Right lobe of liver (tissue), 6 donors: ENCODE measurements at regions of chr14 and their contacts with region 1.

Region 1: DNA sequence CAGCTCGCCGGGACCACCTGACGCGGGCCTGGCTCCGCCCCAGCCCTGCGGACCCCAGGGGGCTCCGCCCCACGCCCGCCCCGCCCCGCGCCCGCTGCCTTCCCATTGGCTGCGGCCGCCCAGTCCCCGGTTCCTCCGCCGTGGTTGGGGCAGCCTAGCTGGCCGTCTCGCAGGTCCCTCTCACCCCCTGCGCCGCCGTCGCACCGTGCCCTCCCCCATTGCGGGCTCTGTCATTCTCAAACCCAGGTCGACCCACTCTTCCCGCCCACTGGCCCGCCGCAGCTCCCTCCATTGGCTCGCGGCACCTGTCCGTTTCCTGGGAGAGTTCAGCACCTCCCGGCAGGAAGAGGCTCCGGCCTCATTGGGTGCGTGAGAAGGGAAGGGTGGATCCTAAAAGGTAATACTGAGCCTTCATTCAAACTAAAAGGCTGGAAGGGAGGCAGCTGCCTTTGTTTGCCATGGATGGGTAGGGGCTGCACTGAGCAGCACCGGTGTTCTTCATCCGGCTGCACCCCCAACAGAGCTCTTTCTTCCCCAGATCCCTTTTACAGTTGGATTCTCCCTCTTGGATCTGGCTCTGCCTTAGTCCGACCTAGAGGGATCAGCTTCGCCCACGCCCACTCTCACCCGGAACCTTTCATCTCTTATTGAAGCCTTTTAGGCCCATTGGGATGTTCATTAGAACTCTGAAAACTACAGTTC is 381 bp upstream of the MAP3K9 start:
- DNase-seq: peak; percentile 96 to 99 (median 98)
- ATAC-seq: peak; percentile 97 to 99 (median 98)
- H3K4me3 ChIP-seq: peak overlapping the region; percentile 5 to 85 (median 81)
- H3K27ac ChIP-seq: peak overlapping the region in 1 of 3 donors; percentile 25
- H3K4me1 ChIP-seq: peaks cover 0 to 6% (median 0%) of the 10 kb centered on the region in 4 donors
- H3K27me3 ChIP-seq: no peaks in the 10 kb centered on the region
- CTCF ChIP-seq: no peak
- POLR2A ChIP-seq: no peak

Region 2: DNA sequence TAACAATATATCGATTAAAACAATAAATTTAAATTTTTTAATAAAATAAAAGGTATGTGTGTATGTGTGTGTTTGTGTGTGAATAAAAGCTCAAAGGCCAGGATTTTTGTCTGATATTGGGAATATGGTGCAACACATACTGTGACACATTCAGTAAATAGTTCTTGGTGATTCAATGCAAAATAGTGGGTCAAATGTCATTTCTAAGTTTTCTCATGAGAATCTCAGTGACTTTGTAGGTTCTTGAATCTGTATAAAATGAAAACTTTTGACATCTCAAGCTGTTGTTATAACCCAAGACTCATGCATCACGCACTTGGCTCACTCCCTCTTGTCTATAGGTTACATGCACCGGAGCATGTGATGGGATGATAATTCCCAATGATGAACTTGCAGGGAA is 193.0 kb before region 1 on chr14:
- intact Hi-C with region 1: loop called in 1 of 2 experiments (anchors 10 kb)
- DNase-seq: no peak
- ATAC-seq: peak in 1 of 4 donors; percentile 36
- H3K4me3 ChIP-seq: no peak overlapping the region
- H3K27ac ChIP-seq: no peak overlapping the region
- H3K4me1 ChIP-seq: no peaks in the 10 kb centered on the region
- H3K27me3 ChIP-seq: no peaks in the 10 kb centered on the region
- CTCF ChIP-seq: no peak
- POLR2A ChIP-seq: no peak

Region 3: GRCh38 chr14:70635971-70636595 is 173.6 kb before region 1 on chr14:
- intact Hi-C with region 1: loop called in 1 of 2 experiments (anchors 10 kb)
- DNase-seq: no peak
- ATAC-seq: peak in 1 of 4 donors; percentile 7
- H3K4me3 ChIP-seq: no peak overlapping the region
- H3K27ac ChIP-seq: no peak overlapping the region
- H3K4me1 ChIP-seq: peaks cover 0 to 4% (median 0%) of the 10 kb centered on the region in 4 donors
- H3K27me3 ChIP-seq: no peaks in the 10 kb centered on the region
- CTCF ChIP-seq: no peak
- POLR2A ChIP-seq: no peak

Region 4: GRCh38 chr14:70735043-70735442 is 74.7 kb before region 1 on chr14:
- intact Hi-C with region 1: loop called in 1 of 2 experiments (anchors 10 kb)
- DNase-seq: no peak
- ATAC-seq: no peak
- H3K4me3 ChIP-seq: no peak overlapping the region
- H3K27ac ChIP-seq: no peak overlapping the region
- H3K4me1 ChIP-seq: peaks cover 0 to 11% (median 2%) of the 10 kb centered on the region in 4 donors
- H3K27me3 ChIP-seq: no peaks in the 10 kb centered on the region
- CTCF ChIP-seq: no peak
- POLR2A ChIP-seq: no peak

Region 5: DNA sequence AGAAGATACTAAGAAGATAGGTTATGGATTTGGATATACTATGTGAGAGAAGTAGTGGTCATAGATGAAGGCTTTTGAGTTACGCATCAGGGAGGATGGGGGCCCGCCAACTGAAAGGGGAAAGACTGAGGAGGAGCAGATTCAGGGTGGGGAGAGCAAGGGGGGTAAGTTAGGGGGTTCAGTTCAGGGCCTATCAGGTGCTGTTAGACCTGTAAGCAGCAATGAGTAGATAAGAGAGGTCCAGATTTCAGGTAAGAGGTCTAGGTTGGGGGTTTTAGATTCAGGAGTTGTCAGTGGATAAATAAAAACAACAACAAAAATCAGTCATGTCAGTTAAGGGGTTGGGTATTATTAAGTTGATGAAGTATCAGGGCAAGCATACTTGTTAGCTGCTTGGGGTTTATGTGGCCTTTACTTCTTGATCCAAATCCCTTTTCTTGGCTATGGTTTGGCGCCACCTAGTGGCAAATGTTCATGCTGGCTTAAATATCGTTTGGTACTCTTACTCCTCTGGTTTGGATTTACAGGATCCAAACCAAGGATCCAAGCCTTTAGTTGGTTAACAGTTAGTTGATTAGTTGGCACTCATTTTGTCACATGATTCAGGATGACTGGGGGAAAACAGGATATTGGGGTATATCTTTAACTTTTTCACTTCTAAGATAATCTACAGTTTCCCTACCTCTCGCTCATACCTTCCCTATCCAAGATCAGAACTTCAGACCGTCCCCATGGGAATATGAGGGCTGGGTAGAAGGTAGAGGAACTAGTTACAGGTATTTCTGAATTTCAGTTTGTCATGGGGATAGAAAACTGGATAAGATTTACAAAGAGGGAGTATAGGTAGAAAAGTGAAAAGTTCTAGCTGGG is 162.6 kb after region 1 on chr14:
- intact Hi-C with region 1: loop called in 1 of 2 experiments (anchors 10 kb)
- DNase-seq: peak; percentile 60 to 83 (median 72)
- ATAC-seq: peak; percentile 92 to 97 (median 94)
- H3K4me3 ChIP-seq: no peak overlapping the region
- H3K27ac ChIP-seq: no peak overlapping the region
- H3K4me1 ChIP-seq: no peaks in the 10 kb centered on the region
- H3K27me3 ChIP-seq: no peaks in the 10 kb centered on the region
- CTCF ChIP-seq: peak; percentile 92 to 96 (median 95)
- POLR2A ChIP-seq: no peak